B cell (primary cell): ENCODE measurements at regions of chr22 and their contacts with region 1.

Region 1: DNA sequence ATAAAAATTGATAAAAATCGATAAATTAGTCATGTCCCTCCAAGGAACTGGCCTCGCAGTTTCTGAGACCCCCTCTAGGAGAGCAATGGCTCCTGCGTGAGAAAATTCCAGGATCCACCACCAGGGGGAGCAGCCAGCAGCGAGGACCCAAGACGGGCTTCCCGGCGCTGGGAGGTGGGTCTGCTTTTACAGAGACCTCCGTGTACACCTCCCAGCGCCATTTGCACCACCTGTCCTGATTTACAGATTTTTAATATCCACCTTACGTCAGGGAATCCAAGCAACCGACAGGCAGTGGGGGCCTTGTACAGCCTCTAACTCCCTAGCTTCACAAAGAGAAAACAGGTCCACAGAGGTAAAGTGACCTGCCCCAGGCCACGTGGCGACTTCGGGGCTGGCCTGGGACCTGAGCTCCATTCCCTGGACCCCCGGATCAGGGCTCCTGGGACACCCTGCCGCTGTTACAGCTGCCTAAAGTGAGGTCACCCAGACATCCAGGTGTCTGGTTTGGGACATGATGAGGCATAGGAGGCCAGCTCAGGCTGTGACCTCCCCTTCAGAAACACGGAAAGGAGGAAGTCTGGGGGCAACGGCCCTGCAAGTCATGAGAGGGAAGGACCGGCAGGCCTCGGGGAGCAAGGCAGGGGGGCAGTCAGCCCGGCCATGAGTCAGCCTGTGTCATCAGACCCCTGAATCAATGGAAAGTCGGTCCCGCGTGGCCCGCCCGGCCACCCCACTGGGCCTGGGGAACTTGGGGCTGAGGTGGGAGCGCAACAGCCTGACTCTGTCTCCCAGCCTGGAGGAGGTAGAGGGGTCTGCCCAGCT is 3.5 kb downstream of the OSM start:
- DNase-seq: peak; percentile 86
- ATAC-seq: no peak
- H3K4me3 ChIP-seq: peak overlapping the region in 3 of 5 experiments; percentile 13 to 42 (median 27)
- H3K4me3 Mint-ChIP-seq: peak overlapping the region; percentile 67
- H3K27ac ChIP-seq: no peak overlapping the region
- H3K27ac Mint-ChIP-seq: peak overlapping the region; percentile 37
- H3K4me1 ChIP-seq: peaks cover 20 to 35% of the 10 kb centered on the region in 2 donors
- H3K4me1 Mint-ChIP-seq: peaks cover 31% of the 10 kb centered on the region
- H3K27me3 ChIP-seq: no peaks in the 10 kb centered on the region
- H3K27me3 Mint-ChIP-seq: no peaks in the 10 kb centered on the region
- CTCF ChIP-seq: peak; percentile 100

Region 2: GRCh38 chr22:30279046-30279788 is 16.1 kb after region 1 on chr22:
- CTCF ChIA-PET with region 1: interaction called, 10 read pairs
- POLR2A ChIA-PET with region 1: no interaction called
- intact Hi-C with region 1: no loop called
- DNase-seq: no peak
- ATAC-seq: no peak
- H3K4me3 ChIP-seq: no peak overlapping the region
- H3K4me3 Mint-ChIP-seq: no peak overlapping the region
- H3K27ac ChIP-seq: no peak overlapping the region
- H3K27ac Mint-ChIP-seq: no peak overlapping the region
- H3K4me1 ChIP-seq: peaks cover 3 to 8% of the 10 kb centered on the region in 2 donors
- H3K4me1 Mint-ChIP-seq: peaks cover 9% of the 10 kb centered on the region
- H3K27me3 ChIP-seq: peaks cover 0 to 26% (median 1%) of the 10 kb centered on the region in 4 experiments
- H3K27me3 Mint-ChIP-seq: peaks cover 38% of the 10 kb centered on the region
- CTCF ChIP-seq: no peak

Region 3: GRCh38 chr22:30356449-30357235 is 93.5 kb after region 1 on chr22 and contains the starts of genes CCDC157 and SF3A1:
- CTCF ChIA-PET with region 1: interaction called, 3 read pairs
- POLR2A ChIA-PET with region 1: no interaction called
- intact Hi-C with region 1: loop called (anchors 1 kb)
- DNase-seq: peak; percentile 95
- ATAC-seq: peak; percentile 88
- H3K4me3 ChIP-seq: peak within 1 kb of the TSS; percentile 92 to 98 (median 96)
- H3K4me3 Mint-ChIP-seq: peak within 1 kb of the TSS; percentile 91
- H3K27ac ChIP-seq: peak within 1 kb of the TSS; percentile 90 to 97
- H3K27ac Mint-ChIP-seq: peak within 1 kb of the TSS; percentile 91
- H3K4me1 ChIP-seq: peaks cover 24 to 35% of the 10 kb centered on the region in 2 donors
- H3K4me1 Mint-ChIP-seq: peaks cover 42% of the 10 kb centered on the region
- H3K27me3 ChIP-seq: no peaks in the 10 kb centered on the region
- H3K27me3 Mint-ChIP-seq: no peaks in the 10 kb centered on the region
- CTCF ChIP-seq: no peak
- total RNA-seq, gene CCDC157: 3.6 and 5.4 TPM in 2 replicates
- total RNA-seq, gene SF3A1: 283 and 286 TPM in 2 replicates

Region 4: DNA sequence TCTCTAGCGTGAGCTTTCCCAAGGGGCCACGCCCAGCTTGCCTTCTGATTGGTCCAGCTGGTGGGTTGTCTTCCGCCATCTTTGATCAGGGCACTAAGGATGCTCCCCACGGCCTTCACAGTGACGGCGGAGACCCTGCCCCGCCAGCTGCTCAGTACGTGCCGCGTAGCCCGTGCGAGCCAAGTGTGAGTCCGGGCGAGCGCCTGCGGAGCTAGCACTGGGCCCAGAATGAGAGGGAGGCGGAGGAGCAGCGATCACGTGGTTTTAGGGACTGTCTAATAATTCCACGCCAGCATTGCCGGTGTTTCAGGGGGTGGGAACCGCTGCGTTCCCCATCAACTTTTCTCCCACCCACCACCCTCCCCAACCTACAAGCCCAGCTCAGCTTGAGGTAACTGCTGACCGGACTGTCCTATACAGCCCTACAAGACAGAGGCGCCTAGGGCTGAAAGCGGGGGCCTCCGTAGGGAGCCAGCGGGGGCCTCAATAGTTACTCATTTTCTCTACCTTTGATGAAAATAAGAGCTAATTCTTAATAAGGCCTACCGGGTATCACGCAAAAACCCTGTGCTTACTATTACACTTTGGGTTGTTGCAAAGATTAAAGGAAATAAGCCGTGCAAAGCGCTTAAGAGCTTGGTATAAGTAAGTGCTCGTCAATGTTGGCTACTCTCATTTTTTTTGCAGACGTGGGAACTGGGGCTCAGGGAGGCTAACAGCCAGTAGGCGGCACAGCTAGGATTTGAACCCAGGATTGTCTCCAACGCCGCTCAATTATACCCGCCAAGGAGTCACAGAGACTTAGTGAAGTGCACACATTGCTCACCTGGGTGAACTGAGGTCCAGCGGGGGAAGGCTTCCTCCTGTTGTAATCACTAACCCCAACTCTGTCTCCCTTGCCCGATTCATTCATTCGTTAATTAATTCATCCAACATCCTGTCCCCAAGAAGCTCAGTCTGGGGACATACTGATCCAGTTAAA is 161.1 kb after region 1 on chr22:
- CTCF ChIA-PET with region 1: interaction called, 4 read pairs
- POLR2A ChIA-PET with region 1: no interaction called
- intact Hi-C with region 1: loop called (anchors 1 kb)
- DNase-seq: peak; percentile 99
- ATAC-seq: peak; percentile 91
- H3K4me3 ChIP-seq: peak overlapping the region; percentile 54 to 84 (median 76)
- H3K4me3 Mint-ChIP-seq: peak overlapping the region; percentile 99
- H3K27ac ChIP-seq: peak overlapping the region; percentile 78 to 89
- H3K27ac Mint-ChIP-seq: peak overlapping the region; percentile 100
- H3K4me1 ChIP-seq: peaks cover 22 to 40% of the 10 kb centered on the region in 2 donors
- H3K4me1 Mint-ChIP-seq: peaks cover 48% of the 10 kb centered on the region
- H3K27me3 ChIP-seq: no peaks in the 10 kb centered on the region
- H3K27me3 Mint-ChIP-seq: no peaks in the 10 kb centered on the region
- CTCF ChIP-seq: no peak